Activated T-helper 2 cell treated with anti-CD3 and anti-CD28 coated beads, Interferon-gamma antibody, Interleukin-2, Interleukin-4, amounts not matched to agents 10 μg/mL and 5 μg/mL and 100 μg/mL, durations not matched to agents 14 hours and 24 hours and 36 hours (primary cell): ENCODE measurements at regions of chr14 and their contacts with region 1.

Region 1: DNA sequence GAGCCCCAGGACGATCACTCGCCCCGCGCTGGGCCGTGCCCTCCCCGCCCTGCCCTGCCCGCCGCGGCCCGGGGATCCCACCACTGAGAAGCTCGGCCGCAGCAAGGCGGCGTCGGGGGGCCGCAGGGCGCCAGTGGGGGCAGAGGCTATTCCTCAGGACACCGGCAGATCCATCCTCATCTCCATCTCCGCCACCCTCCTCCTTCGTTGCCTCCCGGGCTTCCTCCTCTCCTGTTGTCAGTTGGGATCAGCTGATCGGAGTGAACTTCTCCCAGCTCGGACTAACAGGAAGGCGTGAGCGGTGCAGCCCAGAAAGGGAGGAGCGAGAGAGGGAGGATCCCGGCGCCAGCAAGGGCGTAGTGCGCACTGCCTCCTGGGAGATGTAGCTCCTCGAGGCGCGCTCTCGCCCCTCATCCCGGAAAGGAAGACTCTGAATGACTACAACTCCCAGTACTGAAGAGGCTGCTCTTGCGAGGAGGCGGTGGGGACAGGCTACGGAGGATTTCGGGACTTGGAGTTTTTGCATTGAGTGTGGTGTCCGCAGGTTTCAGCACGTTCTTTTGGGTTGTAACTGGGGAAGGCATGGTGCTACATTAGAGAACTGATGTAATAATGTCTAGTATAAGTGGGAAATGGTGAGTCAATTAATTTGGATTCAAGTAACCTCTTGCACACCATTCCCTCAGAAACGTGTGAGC is at the start of gene ZFYVE1:
- DNase-seq: peak; percentile 91
- H3K4me3 Mint-ChIP-seq: peak within 1 kb of the TSS; percentile 94
- H3K27ac Mint-ChIP-seq: peak within 1 kb of the TSS; percentile 86
- H3K4me1 Mint-ChIP-seq: peaks cover 33% of the 10 kb centered on the region
- H3K27me3 Mint-ChIP-seq: no peaks in the 10 kb centered on the region
- total RNA-seq, gene ZFYVE1: 8.3 and 9.8 TPM in 2 replicates

Region 2: GRCh38 chr14:72926292-72927028 is 100.5 kb before region 1 on chr14 and contains the start of gene DCAF4:
- intact Hi-C with region 1: loop called (anchors 1 kb)
- DNase-seq: peak; percentile 94
- H3K4me3 Mint-ChIP-seq: peak within 1 kb of the TSS; percentile 92
- H3K27ac Mint-ChIP-seq: peak within 1 kb of the TSS; percentile 92
- H3K4me1 Mint-ChIP-seq: peaks cover 6% of the 10 kb centered on the region
- H3K27me3 Mint-ChIP-seq: peaks cover 20% of the 10 kb centered on the region
- total RNA-seq, gene DCAF4: 13.2 and 17.6 TPM in 2 replicates

Region 3: GRCh38 chr14:72948481-72949138 is 78.4 kb before region 1 on chr14:
- intact Hi-C with region 1: no loop called
- DNase-seq: peak; percentile 44
- H3K4me3 Mint-ChIP-seq: no peak overlapping the region
- H3K27ac Mint-ChIP-seq: no peak overlapping the region
- H3K4me1 Mint-ChIP-seq: peaks cover 2% of the 10 kb centered on the region
- H3K27me3 Mint-ChIP-seq: no peaks in the 10 kb centered on the region